PC-9 (cell line): ENCODE measurements at regions of chr13 and their contacts with region 1.

Region 1: GRCh38 chr13:80342471-80343380 is 1.8 kb upstream of the SPRY2 start:
- DNase-seq: peak; percentile 37 to 87
- H3K4me3 ChIP-seq: peak overlapping the region; percentile 94
- H3K27ac ChIP-seq: no peak overlapping the region
- H3K4me1 ChIP-seq: peaks cover 7% of the 10 kb centered on the region
- H3K27me3 ChIP-seq: no peaks in the 10 kb centered on the region
- CTCF ChIP-seq: peak; percentile 85

Region 2: DNA sequence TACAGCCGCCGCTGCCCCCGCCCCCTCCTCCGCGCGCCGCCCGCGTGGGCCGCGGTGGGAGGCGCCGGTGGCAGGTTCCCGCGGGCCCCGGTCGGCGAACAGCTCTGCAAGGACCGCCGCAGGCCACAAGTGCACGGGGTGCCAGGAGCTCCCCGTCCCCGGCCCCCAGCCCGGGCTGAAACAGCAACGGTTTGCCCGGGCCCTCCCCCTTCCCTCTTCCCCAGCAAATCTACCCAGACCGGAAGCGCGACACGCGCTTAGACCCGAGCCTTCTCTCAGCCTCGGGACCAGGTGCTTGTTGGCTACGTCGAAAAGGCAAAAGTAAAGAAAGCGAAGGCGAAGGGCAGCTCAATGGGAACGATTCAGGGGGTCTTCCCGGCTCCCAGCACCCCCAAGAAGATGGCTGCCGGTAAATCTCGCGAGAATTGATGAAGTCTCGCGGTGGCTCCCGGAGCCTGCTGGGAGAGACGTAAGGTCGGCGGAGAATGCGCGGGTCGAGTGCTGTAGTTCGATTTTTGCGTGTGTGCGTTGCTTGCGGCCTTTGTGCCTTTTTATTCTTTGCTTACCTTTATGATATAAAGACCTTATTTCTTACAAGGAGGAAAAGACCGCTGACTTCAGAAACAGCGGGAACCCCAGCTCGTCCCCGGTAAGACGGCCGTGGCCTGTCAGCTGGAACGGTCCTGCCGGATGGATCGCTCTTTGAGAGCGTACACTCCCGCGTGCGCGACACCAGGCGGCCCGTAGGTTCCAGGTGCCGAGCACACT is 936.7 kb before region 1 on chr13 and contains the start of gene RBM26:
- CTCF ChIA-PET with region 1: no interaction called
- POLR2A ChIA-PET with region 1: interaction called, 10 read pairs
- intact Hi-C with region 1: loop called (anchors 5 kb)
- DNase-seq: peak; percentile 81 to 89
- H3K4me3 ChIP-seq: peak within 1 kb of the TSS; percentile 90
- H3K27ac ChIP-seq: peak within 1 kb of the TSS; percentile 87
- H3K4me1 ChIP-seq: peaks cover 43% of the 10 kb centered on the region
- H3K27me3 ChIP-seq: no peaks in the 10 kb centered on the region
- CTCF ChIP-seq: no peak
- total RNA-seq, gene RBM26: 35.2 and 40.4 TPM in 2 replicates

Region 3: GRCh38 chr13:79621449-79621848 is 721.3 kb before region 1 on chr13:
- CTCF ChIA-PET with region 1: no interaction called
- POLR2A ChIA-PET with region 1: interaction called, 5 read pairs
- intact Hi-C with region 1: loop called (anchors 1 kb)
- DNase-seq: peak; percentile 0 to 62
- H3K4me3 ChIP-seq: no peak overlapping the region
- H3K27ac ChIP-seq: peak overlapping the region; percentile 96
- H3K4me1 ChIP-seq: peaks cover 26% of the 10 kb centered on the region
- H3K27me3 ChIP-seq: no peaks in the 10 kb centered on the region
- CTCF ChIP-seq: no peak

Region 4: DNA sequence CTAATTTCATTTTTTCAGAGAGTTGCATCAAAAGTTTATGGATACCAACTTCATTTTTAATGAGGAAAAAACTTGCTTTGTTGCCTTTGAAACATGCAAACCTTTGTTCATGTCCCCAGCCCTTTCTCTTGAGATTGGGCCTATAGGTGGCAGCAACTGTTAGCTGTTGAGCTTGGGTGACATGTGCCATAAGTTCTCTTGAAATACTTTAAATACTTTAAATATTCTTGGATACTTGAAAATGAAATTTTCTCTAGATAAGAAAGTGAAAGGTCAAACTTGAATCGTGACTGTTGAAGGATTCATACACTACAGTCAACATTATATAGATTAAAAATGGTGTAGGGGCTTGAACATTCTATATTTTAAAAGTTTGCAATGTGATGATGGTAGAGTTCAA is 566.9 kb before region 1 on chr13:
- CTCF ChIA-PET with region 1: no interaction called
- POLR2A ChIA-PET with region 1: interaction called, 3 read pairs
- intact Hi-C with region 1: loop called (anchors 1 kb)
- DNase-seq: peak; percentile 54 to 66
- H3K4me3 ChIP-seq: no peak overlapping the region
- H3K27ac ChIP-seq: no peak overlapping the region
- H3K4me1 ChIP-seq: peaks cover 18% of the 10 kb centered on the region
- H3K27me3 ChIP-seq: no peaks in the 10 kb centered on the region
- CTCF ChIP-seq: peak; percentile 73

Region 5: GRCh38 chr13:79936368-79937136 is 406.2 kb before region 1 on chr13:
- CTCF ChIA-PET with region 1: interaction called, 4 read pairs
- POLR2A ChIA-PET with region 1: interaction called, 4 read pairs
- intact Hi-C with region 1: loop called (anchors 2 kb)
- DNase-seq: peak; percentile 63 to 98
- H3K4me3 ChIP-seq: peak overlapping the region; percentile 6; the same call in 1 of the 2 replicates
- H3K27ac ChIP-seq: peak overlapping the region; percentile 92
- H3K4me1 ChIP-seq: peaks cover 26% of the 10 kb centered on the region
- H3K27me3 ChIP-seq: no peaks in the 10 kb centered on the region
- CTCF ChIP-seq: no peak

Region 6: DNA sequence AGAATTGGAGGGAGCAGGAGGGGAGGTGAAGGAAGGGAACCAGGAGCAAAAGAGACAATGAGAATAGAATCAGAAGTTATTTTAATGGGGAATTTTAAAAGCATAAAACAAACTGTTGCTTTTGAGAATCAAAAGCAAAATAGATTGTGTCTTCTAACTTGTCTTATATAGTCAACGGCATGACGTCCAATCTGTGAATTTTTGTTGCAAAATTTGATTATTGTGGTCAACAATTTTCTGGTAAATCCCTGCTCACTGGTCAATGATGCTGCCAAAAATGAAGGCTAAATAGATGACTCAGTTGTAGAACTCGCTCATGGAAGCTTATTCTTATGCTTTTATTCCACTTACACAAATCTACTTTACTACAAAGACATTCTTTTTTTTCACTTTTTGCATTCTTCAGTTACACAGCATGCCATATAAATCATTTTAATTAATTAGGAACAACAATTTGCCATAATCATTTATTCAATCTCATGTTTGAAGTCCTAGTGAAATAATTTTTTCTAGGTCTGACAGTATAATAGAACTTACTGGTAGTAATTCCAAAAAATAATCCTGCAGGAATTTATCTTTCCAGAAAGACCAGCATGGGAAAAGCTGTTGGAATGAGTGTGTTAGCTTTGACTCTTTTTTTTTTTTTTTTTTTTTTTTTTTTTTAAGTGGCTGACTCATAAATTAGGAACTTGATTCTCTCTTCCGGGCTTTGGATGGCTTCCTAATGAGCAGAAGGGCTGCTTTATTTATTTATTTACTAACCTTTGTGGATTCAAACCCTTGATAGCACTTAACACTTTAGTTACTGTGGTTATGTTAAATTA is 258.7 kb before region 1 on chr13:
- CTCF ChIA-PET with region 1: no interaction called
- POLR2A ChIA-PET with region 1: no interaction called
- intact Hi-C with region 1: loop called (anchors 1 kb)
- DNase-seq: peak in 1 of 2 experiments; percentile 82
- H3K4me3 ChIP-seq: no peak overlapping the region
- H3K27ac ChIP-seq: peak overlapping the region; percentile 43; the same call in 1 of the 2 replicates
- H3K4me1 ChIP-seq: peaks cover 53% of the 10 kb centered on the region
- H3K27me3 ChIP-seq: no peaks in the 10 kb centered on the region
- CTCF ChIP-seq: no peak

Region 7: DNA sequence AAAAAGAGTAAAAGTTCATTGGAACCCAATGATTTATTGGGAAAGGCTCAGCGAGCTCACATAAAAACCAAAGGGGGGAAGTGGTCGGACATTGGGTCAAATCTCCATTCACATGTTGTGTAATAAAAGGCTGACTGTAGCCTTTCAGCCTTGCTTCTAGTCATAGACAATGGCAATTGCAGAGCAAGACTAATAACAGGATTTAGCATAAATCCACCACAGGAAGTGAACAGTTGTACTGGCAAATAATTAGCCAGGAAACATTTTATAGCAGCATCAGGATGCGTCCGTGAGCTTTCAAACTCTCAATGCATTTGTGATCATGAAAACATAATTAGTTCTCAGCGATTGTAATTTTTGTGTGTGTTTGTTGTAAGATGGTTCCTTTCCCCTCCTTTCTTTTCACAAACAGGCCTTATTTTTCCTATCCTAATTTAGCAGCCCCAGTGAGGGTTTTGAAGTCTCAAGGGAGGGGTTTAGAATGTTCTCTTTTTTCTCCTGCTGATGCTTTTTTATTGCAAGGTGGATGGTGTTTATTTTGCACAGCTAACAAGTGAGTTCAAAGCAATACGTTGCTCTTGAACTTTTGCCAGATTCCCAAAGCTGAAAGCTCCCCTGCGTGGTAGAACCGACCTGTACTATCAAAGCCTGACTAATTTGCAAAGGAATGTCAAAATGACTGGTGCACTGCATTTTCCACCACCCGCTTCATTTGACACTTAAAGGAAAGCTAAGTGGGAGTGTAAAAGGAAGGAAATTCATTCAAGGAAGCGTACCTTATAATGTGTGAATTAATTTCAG is 107.4 kb before region 1 on chr13:
- CTCF ChIA-PET with region 1: no interaction called
- POLR2A ChIA-PET with region 1: no interaction called
- intact Hi-C with region 1: loop called (anchors 1 kb)
- DNase-seq: peak; percentile 15 to 74
- H3K4me3 ChIP-seq: no peak overlapping the region
- H3K27ac ChIP-seq: 0 out of 2 replicates have a peak overlapping the region, but pooled peaks have one; percentile 18
- H3K4me1 ChIP-seq: peaks cover 39% of the 10 kb centered on the region
- H3K27me3 ChIP-seq: no peaks in the 10 kb centered on the region
- CTCF ChIP-seq: no peak